ENCODE measurements at regions of chr1 and their contacts with region 1.

Region 1: DNA sequence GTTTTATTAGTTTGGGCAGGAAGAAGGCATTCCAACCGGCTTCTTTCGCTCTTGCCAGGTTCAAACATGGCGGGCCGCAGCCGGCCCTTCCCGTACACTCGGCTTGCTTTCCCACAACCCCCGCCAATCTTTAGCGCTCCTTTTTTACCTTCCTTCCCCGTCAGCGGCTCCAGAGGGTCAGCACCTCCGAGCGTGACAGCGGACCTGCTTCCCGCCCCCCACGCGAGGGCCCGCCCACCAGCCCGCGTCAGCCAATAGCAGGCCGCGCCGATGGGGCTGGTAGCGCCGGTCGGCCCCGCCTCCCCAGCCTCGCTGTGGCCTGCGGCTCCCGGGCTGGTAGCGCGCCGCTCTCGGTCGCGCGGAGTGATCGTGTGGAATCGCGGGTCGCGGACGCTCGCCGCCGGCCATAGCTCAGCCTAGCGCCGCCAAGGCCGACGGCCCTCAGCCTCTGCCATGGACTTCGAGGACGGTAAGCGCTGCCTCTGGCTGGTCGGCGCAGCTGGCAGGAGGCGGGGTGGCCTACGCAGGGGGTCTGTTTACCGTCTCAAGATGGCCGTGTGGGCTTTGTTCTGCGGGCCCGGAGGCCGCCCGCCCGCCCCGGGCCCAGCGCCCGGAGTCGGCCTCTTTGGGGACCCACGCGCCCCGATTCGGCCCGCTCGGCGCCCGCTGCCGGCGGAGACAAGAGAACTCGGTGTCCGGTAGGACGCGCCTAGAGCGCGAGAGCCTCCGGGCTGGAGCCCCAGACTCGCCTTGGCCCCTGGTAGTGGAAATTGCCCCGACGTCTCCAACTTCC is at the start of gene ZNF326:
- ATAC-seq: peak; percentile 80 to 97 (median 96)
- H3K4me3 ChIP-seq: peak within 1 kb of the TSS; percentile 54 to 73 (median 66)
- H3K27ac ChIP-seq: peak within 1 kb of the TSS; percentile 82 to 89
- H3K4me1 ChIP-seq: peaks cover 11 to 27% of the 10 kb centered on the region in 2 donors
- total RNA-seq, gene ZNF326: 18.6 to 45.4 (median 32.4) TPM

Region 2: GRCh38 chr1:89483010-89483756 is 511.8 kb before region 1 on chr1:
- in situ Hi-C with region 1: loop called in 1 of 9 experiments (anchors 25 kb)
- ATAC-seq: peak; percentile 83 to 95 (median 88)
- H3K4me3 ChIP-seq: no peak overlapping the region
- H3K27ac ChIP-seq: no peak overlapping the region
- H3K4me1 ChIP-seq: no peaks in the 10 kb centered on the region

Region 3: GRCh38 chr1:89598450-89599331 is 396.3 kb before region 1 on chr1:
- in situ Hi-C with region 1: no loop called
- ATAC-seq: peak; percentile 58 to 81 (median 69)
- H3K4me3 ChIP-seq: no peak overlapping the region
- H3K27ac ChIP-seq: no peak overlapping the region
- H3K4me1 ChIP-seq: peaks cover 5 to 21% of the 10 kb centered on the region in 2 donors

Region 4: GRCh38 chr1:89632657-89633247 is 362.2 kb before region 1 on chr1 and contains the start of gene LRRC8C:
- in situ Hi-C with region 1: loop called in 3 of 9 experiments (anchors 25 kb)
- ATAC-seq: peak; percentile 90 to 96 (median 92)
- H3K4me3 ChIP-seq: peak within 1 kb of the TSS; percentile 65 to 85 (median 75)
- H3K27ac ChIP-seq: peak within 1 kb of the TSS; percentile 27 to 55
- H3K4me1 ChIP-seq: peaks cover 5 to 8% of the 10 kb centered on the region in 2 donors
- total RNA-seq, gene LRRC8C: 1.7 to 8.0 (median 2.5) TPM

Region 5: GRCh38 chr1:89670163-89670562 is 324.8 kb before region 1 on chr1:
- in situ Hi-C with region 1: no loop called
- ATAC-seq: peak in 2 of 8 experiments; percentile 9 to 52
- H3K4me3 ChIP-seq: no peak overlapping the region
- H3K27ac ChIP-seq: no peak overlapping the region
- H3K4me1 ChIP-seq: peaks cover 0 to 4% of the 10 kb centered on the region in 2 donors

Region 6: GRCh38 chr1:89804642-89805237 is 190.3 kb before region 1 on chr1:
- in situ Hi-C with region 1: loop called in 2 of 9 experiments (anchors 10 to 25 kb)
- ATAC-seq: peak; percentile 58 to 95 (median 79)
- H3K4me3 ChIP-seq: no peak overlapping the region
- H3K27ac ChIP-seq: no peak overlapping the region
- H3K4me1 ChIP-seq: peaks cover 17 to 29% of the 10 kb centered on the region in 2 donors

Region 7: GRCh38 chr1:90045853-90046563 is 51.0 kb after region 1 on chr1:
- in situ Hi-C with region 1: no loop called
- ATAC-seq: peak in 3 of 8 experiments; percentile 54 to 73 (median 64)
- H3K4me3 ChIP-seq: no peak overlapping the region
- H3K27ac ChIP-seq: no peak overlapping the region
- H3K4me1 ChIP-seq: peaks cover 0 to 3% of the 10 kb centered on the region in 2 donors

Region 8: DNA sequence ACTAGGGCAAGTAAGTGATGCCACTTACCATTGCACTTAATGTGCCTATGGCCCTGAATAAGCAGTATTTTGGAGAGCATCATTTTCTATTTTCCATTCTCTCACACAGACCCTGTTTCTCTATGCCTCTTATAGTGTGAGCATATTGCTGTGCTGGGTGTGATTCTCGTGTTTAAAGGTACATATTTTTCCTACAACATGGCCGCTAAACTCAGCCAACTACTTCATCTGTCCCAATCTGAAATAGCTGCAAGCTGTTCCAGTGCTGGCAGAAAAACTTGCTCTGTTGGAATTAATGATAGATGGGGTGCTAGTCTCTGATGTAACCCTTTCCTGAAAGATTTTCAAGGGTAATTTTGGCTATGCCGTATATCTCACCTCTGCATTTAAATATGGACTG is 97.4 kb after region 1 on chr1:
- in situ Hi-C with region 1: no loop called
- ATAC-seq: no peak
- H3K4me3 ChIP-seq: no peak overlapping the region
- H3K27ac ChIP-seq: no peak overlapping the region
- H3K4me1 ChIP-seq: no peaks in the 10 kb centered on the region

Measured in motor neuron (in vitro differentiated cells).